T-cell (primary cell): ENCODE measurements at regions of chr12 and their contacts with region 1.

Region 1: GRCh38 chr12:22396253-22396652 is 61.7 kb upstream of the ST8SIA1 start:
- DNase-seq: peak in 12 of 35 experiments; percentile 4 to 64 (median 9)
- ATAC-seq: peak; percentile 81 to 91 (median 84)
- H3K4me3 ChIP-seq: no peak overlapping the region
- H3K4me3 Mint-ChIP-seq: peak overlapping the region; percentile 57 to 65 (median 63)
- H3K27ac ChIP-seq: peak overlapping the region; percentile 76
- H3K27ac Mint-ChIP-seq: peak overlapping the region; percentile 92 to 94
- H3K4me1 ChIP-seq: peaks cover 19 to 27% of the 10 kb centered on the region in 2 experiments
- H3K4me1 Mint-ChIP-seq: peaks cover 42 to 51% (median 46%) of the 10 kb centered on the region in 3 donors
- H3K27me3 ChIP-seq: no peaks in the 10 kb centered on the region
- H3K27me3 Mint-ChIP-seq: no peaks in the 10 kb centered on the region

Region 2: GRCh38 chr12:22018860-22019259 is 377.4 kb before region 1 on chr12:
- CTCF ChIA-PET with region 1: interaction called in 1 of 2 experiments, 10 read pairs
- POLR2A ChIA-PET with region 1: no interaction called
- DNase-seq: peak in 1 of 35 experiments; percentile 32
- ATAC-seq: no peak
- H3K4me3 ChIP-seq: no peak overlapping the region
- H3K4me3 Mint-ChIP-seq: no peak overlapping the region
- H3K27ac ChIP-seq: no peak overlapping the region
- H3K27ac Mint-ChIP-seq: no peak overlapping the region
- H3K4me1 ChIP-seq: no peaks in the 10 kb centered on the region
- H3K4me1 Mint-ChIP-seq: no peaks in the 10 kb centered on the region
- H3K27me3 ChIP-seq: peaks cover 0 to 3% of the 10 kb centered on the region in 2 experiments
- H3K27me3 Mint-ChIP-seq: peaks cover 3 to 4% of the 10 kb centered on the region in 2 donors